ENCODE measurements at regions of chr17 and their contacts with region 1.

Region 1: GRCh38 chr17:58587702-58588254 is 73.3 kb upstream of the MTMR4 start:
- DNase-seq: no peak
- ATAC-seq: peak; percentile 92
- H3K4me3 ChIP-seq: no peak overlapping the region
- H3K27ac ChIP-seq: no peak overlapping the region
- H3K4me1 ChIP-seq: no peaks in the 10 kb centered on the region
- H3K27me3 ChIP-seq: no peaks in the 10 kb centered on the region
- CTCF ChIP-seq: peak; percentile 94 to 97 (median 97)
- EP300 ChIP-seq: no peak
- POLR2A ChIP-seq: no peak
- RAD21 ChIP-seq: peak; percentile 95

Region 2: DNA sequence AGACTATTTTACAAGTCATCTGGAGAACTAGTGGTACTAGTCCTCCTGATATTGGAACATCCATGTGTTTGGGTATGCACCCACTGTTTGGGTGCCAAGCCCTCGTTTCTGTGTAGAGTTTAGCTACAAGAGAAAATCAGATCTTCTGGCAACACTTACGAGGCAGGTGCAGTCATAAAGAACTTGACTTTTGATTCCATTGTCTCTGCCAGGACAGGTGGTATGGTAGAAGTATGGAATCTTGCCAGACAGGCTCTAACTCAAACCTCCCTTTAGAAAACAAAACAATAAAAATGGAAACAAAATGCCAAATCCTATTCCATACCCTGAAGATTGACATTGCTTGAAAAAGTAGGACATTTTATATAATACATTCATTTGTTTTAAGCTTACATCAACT is 186.5 kb before region 1 on chr17:
- CTCF ChIA-PET with region 1: no interaction called
- POLR2A ChIA-PET with region 1: no interaction called
- RAD21 ChIA-PET with region 1: no interaction called
- SMC1A ChIA-PET with region 1: no interaction called
- in situ Hi-C with region 1: no loop called
- intact Hi-C with region 1: no loop called
- DNase-seq: no peak
- ATAC-seq: no peak
- H3K4me3 ChIP-seq: no peak overlapping the region
- H3K27ac ChIP-seq: no peak overlapping the region
- H3K4me1 ChIP-seq: no peaks in the 10 kb centered on the region
- H3K27me3 ChIP-seq: no peaks in the 10 kb centered on the region; a peak in 1 of 4 replicates
- CTCF ChIP-seq: no peak
- EP300 ChIP-seq: no peak
- POLR2A ChIP-seq: no peak
- RAD21 ChIP-seq: no peak

Region 3: DNA sequence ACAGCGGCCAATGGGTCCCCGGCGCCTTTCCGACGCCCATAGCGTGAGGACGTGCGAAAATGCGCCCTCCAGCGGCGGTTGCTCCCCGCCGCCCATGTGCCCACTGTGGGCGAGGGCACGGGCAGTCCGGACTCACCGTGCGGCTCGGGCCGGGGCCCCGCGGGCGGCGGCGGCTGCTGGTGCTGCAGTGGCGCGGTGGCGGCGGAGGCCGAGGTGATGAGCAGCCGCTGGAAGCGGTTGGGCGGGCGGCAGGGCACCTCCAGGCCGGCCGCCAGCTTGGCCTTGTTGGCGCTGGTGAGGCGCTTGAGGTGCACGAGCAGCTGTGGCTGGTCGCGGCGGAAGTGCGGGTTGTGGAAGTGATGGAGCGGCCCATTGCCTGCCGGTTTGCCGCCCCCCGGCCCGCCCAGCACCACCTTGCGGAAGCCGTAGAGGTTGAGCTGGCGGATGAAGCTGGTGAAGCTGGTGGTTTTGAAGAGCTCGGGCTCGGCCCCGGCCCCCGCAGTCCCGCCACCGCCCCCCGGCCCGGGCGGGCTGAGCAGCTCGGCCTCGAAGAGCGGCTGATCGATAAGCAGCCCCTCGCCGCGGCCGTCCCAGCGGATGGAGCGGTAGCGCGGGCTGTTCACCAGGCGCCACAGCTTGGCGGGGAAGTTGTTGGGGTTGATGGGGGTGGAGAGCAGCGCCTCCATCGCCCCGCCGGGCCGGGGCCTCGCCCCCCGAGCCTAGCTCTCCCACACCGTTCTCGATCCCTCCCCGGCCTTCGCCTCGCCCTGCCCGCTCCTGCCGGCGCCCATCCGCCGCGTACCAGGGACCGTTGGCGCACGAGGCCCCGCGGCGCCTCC is 100.0 kb before region 1 on chr17 and contains the start of gene HSF5:
- CTCF ChIA-PET with region 1: no interaction called
- POLR2A ChIA-PET with region 1: no interaction called
- RAD21 ChIA-PET with region 1: no interaction called
- SMC1A ChIA-PET with region 1: no interaction called
- in situ Hi-C with region 1: no loop called
- intact Hi-C with region 1: no loop called
- DNase-seq: no peak
- ATAC-seq: no peak
- H3K4me3 ChIP-seq: no peak within 1 kb of the TSS
- H3K27ac ChIP-seq: no peak within 1 kb of the TSS
- H3K4me1 ChIP-seq: no peaks in the 10 kb centered on the region
- H3K27me3 ChIP-seq: no peaks in the 10 kb centered on the region
- CTCF ChIP-seq: peak in 2 of 3 experiments; percentile 12 to 33; a peak in 3 of 6 replicates
- EP300 ChIP-seq: no peak
- POLR2A ChIP-seq: no peak
- RAD21 ChIP-seq: no peak
- polyA plus RNA-seq, gene HSF5: 0.02 to 0.04 TPM

Region 4: GRCh38 chr17:58541249-58541648 is 46.5 kb before region 1 on chr17:
- CTCF ChIA-PET with region 1: interaction called, 24 read pairs
- POLR2A ChIA-PET with region 1: no interaction called
- RAD21 ChIA-PET with region 1: interaction called, 3 read pairs
- SMC1A ChIA-PET with region 1: interaction called, 4 read pairs
- in situ Hi-C with region 1: no loop called
- intact Hi-C with region 1: no loop called
- DNase-seq: no peak
- ATAC-seq: peak; percentile 88
- H3K4me3 ChIP-seq: no peak overlapping the region
- H3K27ac ChIP-seq: no peak overlapping the region
- H3K4me1 ChIP-seq: no peaks in the 10 kb centered on the region
- H3K27me3 ChIP-seq: no peaks in the 10 kb centered on the region; a peak in 1 of 4 replicates
- CTCF ChIP-seq: peak; percentile 41 to 59 (median 47)
- EP300 ChIP-seq: no peak
- POLR2A ChIP-seq: no peak
- RAD21 ChIP-seq: peak; percentile 49

Region 5: DNA sequence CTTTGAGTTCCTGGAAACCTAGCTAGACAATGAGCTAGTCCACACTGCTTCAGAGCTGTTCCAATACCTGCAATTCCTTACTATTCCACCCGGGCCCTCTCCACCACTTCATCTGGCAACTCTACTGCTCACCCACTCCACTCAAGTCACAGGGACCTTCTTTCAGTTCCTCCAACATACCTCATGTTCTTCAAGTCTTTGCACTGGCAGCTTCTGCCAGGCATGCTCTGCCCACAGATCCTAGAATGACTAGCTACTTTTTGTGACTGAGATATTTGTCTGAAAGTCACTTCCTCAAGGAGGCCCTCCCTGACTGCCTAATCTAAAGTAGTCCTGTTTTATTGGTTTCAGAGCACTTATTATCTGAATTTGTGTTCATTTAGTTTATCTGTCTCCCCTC is 17.7 kb after region 1 on chr17:
- CTCF ChIA-PET with region 1: interaction called, 12 read pairs
- POLR2A ChIA-PET with region 1: interaction called, 3 read pairs
- RAD21 ChIA-PET with region 1: interaction called, 3 read pairs
- SMC1A ChIA-PET with region 1: interaction called, 8 read pairs
- in situ Hi-C with region 1: no loop called
- intact Hi-C with region 1: no loop called
- DNase-seq: no peak
- ATAC-seq: peak; percentile 91
- H3K4me3 ChIP-seq: no peak overlapping the region
- H3K27ac ChIP-seq: no peak overlapping the region
- H3K4me1 ChIP-seq: peaks cover 7% of the 10 kb centered on the region; the same call in 1 of the 2 replicates
- H3K27me3 ChIP-seq: no peaks in the 10 kb centered on the region
- CTCF ChIP-seq: 0 out of 6 replicates have a peak, but pooled peaks of 1 of the 3 experiments have one; percentile 11
- EP300 ChIP-seq: no peak
- POLR2A ChIP-seq: no peak
- RAD21 ChIP-seq: no peak

Region 6: GRCh38 chr17:58615768-58616659 is 28.2 kb after region 1 on chr17:
- CTCF ChIA-PET with region 1: interaction called, 7 read pairs
- POLR2A ChIA-PET with region 1: no interaction called
- RAD21 ChIA-PET with region 1: interaction called, 12 read pairs
- SMC1A ChIA-PET with region 1: interaction called, 15 read pairs
- in situ Hi-C with region 1: no loop called
- intact Hi-C with region 1: no loop called
- DNase-seq: peak; percentile 71
- ATAC-seq: peak; percentile 79
- H3K4me3 ChIP-seq: peak overlapping the region; percentile 28; the same call in 1 of the 2 replicates
- H3K27ac ChIP-seq: peak overlapping the region; percentile 83
- H3K4me1 ChIP-seq: peaks cover 63% of the 10 kb centered on the region
- H3K27me3 ChIP-seq: no peaks in the 10 kb centered on the region
- CTCF ChIP-seq: no peak
- EP300 ChIP-seq: 0 out of 4 replicates have a peak, but pooled peaks of 1 of the 2 experiments have one; percentile 31
- POLR2A ChIP-seq: no peak
- RAD21 ChIP-seq: no peak

Region 7: DNA sequence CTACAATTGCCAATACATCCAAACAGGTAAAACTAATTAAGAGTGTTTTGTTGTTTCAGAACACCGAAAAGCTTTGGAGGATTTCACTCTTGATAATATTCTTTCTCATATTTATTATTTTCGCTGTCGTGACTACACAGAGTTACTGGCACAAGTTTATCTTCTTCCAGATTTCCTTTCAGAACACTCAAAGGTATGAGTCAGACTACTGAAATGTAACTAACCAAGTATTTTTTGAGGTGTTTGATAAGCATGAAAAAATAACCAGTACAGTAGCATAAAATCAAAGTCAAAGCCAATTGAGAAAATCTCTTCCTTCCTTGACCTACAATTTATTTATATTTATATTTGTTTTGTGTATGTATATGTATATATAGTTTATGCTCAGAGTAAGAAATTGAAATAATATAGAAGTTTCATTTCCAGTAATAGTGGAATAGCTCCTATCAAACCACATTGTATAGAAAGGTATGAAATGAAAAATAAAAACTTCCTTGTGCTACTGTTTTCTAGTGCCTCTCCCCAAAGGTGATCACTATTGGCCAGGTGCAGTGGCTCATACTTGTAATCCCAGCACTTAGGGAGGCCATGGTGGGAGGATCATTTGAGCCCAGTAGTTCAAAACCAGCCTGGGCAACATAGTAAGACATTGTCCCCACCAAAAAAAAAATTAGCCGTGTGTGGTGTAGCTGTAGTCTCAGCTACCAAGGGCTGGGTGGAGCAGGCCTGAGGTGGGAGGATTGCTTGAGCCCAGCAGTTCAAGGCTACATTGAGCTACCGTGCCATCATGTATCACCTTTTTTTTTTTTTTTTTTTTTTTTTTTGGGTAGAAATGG is 115.6 kb after region 1 on chr17:
- CTCF ChIA-PET with region 1: interaction called, 4 read pairs
- POLR2A ChIA-PET with region 1: no interaction called
- RAD21 ChIA-PET with region 1: no interaction called
- SMC1A ChIA-PET with region 1: interaction called, 4 read pairs
- in situ Hi-C with region 1: no loop called
- intact Hi-C with region 1: loop called (anchors 5 kb)
- DNase-seq: no peak
- ATAC-seq: 0 out of 3 replicates have a peak, but pooled peaks have one; percentile 3
- H3K4me3 ChIP-seq: no peak overlapping the region
- H3K27ac ChIP-seq: peak overlapping the region; percentile 78; the same call in 1 of the 2 replicates
- H3K4me1 ChIP-seq: peaks cover 41% of the 10 kb centered on the region
- H3K27me3 ChIP-seq: no peaks in the 10 kb centered on the region
- CTCF ChIP-seq: no peak
- EP300 ChIP-seq: no peak
- POLR2A ChIP-seq: no peak
- RAD21 ChIP-seq: no peak

Region 8: GRCh38 chr17:58722696-58723095 is 134.9 kb after region 1 on chr17:
- CTCF ChIA-PET with region 1: no interaction called
- POLR2A ChIA-PET with region 1: no interaction called
- RAD21 ChIA-PET with region 1: no interaction called
- SMC1A ChIA-PET with region 1: no interaction called
- in situ Hi-C with region 1: no loop called
- intact Hi-C with region 1: no loop called
- DNase-seq: no peak
- ATAC-seq: no peak; the same call in 2 of the 3 replicates
- H3K4me3 ChIP-seq: no peak overlapping the region
- H3K27ac ChIP-seq: no peak overlapping the region
- H3K4me1 ChIP-seq: no peaks in the 10 kb centered on the region
- H3K27me3 ChIP-seq: no peaks in the 10 kb centered on the region
- CTCF ChIP-seq: no peak
- EP300 ChIP-seq: no peak
- POLR2A ChIP-seq: no peak
- RAD21 ChIP-seq: no peak